Activated CD8-positive, alpha-beta T cell treated with anti-CD3 and anti-CD28 coated beads for 36 hours (primary cell): ENCODE measurements at regions of chr17 and their contacts with region 1.

Region 1: DNA sequence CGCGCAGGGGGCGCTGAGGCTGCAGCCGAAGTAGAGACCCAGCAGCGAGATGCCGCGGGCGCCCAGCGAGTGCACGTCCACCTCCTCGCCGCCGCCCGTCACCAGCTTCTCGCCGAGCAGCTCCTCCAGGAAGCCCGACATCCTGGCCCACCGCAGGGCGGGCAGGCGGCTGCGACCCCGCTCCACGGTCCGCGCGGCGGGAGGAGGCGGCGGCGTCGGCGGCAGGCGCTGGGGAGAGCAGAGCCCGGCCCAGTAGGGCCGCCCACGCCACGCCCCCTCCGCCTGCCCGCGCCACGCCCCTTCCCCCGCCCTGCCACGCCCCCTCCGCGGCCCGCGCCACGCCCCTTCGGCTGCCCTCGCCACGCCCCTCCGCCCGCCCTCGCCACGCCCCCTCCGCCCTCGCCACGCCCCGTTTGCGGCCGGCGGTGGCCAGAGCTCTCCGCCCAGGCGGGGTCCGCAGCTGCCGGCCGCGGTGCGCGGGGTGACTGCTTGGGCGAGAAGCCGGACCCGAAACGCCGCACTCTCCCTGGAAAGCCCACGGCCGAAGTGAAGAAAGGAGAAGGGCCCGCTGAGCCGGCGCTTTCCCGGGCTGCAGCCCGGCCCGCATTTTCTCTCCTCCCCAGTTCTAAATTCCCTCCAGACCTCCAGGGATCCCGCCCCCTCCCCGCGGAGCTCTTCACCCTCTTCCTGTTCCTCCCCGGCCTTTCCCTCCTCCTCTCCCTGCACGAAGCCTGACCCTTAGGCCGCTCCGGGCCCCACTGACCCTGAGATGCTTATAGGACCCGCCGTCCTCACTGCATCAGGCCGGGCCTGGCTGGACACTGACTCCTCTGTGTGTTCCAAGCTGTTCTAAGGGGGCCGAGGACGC is at the start of gene NXN:
- DNase-seq: peak; percentile 86
- ATAC-seq: peak; percentile 87
- H3K4me3 Mint-ChIP-seq: peak within 1 kb of the TSS; percentile 67
- H3K27ac Mint-ChIP-seq: no peak within 1 kb of the TSS
- H3K4me1 Mint-ChIP-seq: peaks cover 11% of the 10 kb centered on the region
- H3K27me3 Mint-ChIP-seq: peaks cover 28% of the 10 kb centered on the region
- CTCF ChIP-seq: no peak
- total RNA-seq, gene NXN: 1.2 to 1.4 TPM

Region 2: DNA sequence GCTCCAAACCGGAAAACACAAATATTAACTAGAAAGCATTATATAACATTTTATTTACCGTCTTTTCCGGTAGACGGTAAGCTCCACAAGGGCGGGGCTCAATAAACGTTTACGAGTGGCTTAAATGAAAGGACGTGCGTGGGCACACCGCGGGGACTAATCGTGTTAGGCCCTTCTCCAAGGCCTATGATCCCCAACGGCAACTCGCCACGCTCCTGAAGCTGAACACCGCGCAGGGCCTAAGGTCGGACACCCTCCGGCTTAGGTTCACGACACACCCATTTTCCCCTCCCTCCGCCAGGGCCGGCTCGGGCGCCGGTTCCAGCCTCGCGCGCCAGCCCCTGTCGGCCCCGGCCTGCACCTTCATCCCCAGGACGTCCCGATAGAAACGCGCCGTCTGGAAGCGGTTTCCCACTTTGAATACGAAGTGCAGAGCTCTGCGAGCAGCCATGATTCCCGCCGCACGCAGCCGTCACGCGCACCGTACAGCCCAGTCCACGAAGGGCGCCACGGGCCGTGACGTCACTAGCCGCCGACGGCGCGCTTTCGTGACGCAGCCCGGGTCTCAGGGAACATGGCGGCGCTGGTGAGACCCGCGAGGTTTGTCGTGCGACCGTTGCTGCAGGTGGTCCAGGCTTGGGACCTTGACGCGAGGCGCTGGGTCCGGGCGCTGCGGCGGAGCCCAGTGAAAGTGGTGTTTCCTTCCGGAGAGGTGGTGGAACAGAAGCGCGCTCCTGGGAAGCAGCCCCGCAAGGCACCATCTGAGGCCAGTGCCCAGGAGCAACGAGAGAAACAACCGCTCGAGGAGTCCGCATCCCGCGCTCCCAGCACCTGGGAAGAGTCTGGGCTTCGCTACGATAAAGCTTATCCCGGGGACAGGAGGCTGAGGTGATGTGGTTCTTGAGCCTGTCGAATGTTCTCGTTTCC is 197.7 kb before region 1 on chr17 and contains the starts of genes GLOD4 and MRM3:
- CTCF ChIA-PET with region 1: interaction called, 10 read pairs
- POLR2A ChIA-PET with region 1: interaction called, 4 read pairs
- intact Hi-C with region 1: no loop called
- DNase-seq: peak; percentile 96
- ATAC-seq: peak; percentile 95
- H3K4me3 Mint-ChIP-seq: peak within 1 kb of the TSS; percentile 89
- H3K27ac Mint-ChIP-seq: peak within 1 kb of the TSS; percentile 96
- H3K4me1 Mint-ChIP-seq: peaks cover 32% of the 10 kb centered on the region
- H3K27me3 Mint-ChIP-seq: no peaks in the 10 kb centered on the region
- CTCF ChIP-seq: peak; percentile 15
- total RNA-seq, gene GLOD4: 47.3 to 55.2 TPM
- total RNA-seq, gene MRM3: 35.5 to 36.2 TPM

Region 3: GRCh38 chr17:794876-795275 is 184.9 kb before region 1 on chr17:
- CTCF ChIA-PET with region 1: interaction called, 63 read pairs
- POLR2A ChIA-PET with region 1: no interaction called
- intact Hi-C with region 1: loop called (anchors 5 kb)
- DNase-seq: peak; percentile 59
- ATAC-seq: peak; percentile 88
- H3K4me3 Mint-ChIP-seq: no peak overlapping the region
- H3K27ac Mint-ChIP-seq: no peak overlapping the region
- H3K4me1 Mint-ChIP-seq: no peaks in the 10 kb centered on the region
- H3K27me3 Mint-ChIP-seq: no peaks in the 10 kb centered on the region
- CTCF ChIP-seq: peak; percentile 84

Region 4: DNA sequence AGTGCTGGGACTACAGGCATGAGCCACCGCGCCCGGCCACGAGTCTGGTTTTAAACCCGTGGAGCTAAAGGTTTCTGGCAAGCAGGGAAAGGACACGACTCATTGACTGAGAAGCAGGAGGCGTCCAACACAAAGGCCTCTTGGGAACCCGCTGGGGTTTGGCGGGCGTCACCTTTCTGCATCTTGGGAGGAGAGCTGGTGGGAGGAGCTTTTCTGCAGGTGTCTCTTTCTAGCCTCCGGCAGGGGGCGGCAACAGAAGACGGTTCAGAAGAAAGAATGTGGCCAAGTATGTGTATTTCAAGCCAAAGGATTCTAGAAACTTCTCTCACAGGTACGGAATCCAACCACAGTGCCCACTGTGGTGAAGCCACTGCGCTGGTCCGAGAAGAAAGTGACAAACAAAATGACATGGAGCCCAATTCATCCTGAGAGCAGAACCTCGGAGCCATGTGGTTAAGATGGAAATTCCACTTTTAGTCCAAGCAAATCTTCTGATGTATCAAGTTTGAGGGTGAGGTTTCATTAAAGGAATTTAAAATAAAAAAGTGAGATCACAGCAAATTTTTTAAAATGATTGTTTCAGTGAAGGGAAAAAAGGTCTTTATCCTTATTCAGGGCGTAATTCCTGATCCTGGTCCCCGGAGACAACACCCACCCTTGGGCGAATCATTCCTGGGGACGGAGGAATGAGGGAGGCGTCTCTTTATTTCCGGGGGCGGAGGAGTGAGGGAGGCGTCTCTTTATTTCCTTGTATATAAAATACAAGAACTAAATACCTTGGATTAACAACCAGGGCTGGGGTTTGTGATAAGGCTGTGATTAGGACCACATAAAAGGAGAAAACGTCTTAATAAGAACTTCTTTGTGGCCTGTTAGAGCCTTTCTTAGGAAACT is 100.0 kb before region 1 on chr17:
- CTCF ChIA-PET with region 1: interaction called, 52 read pairs
- POLR2A ChIA-PET with region 1: no interaction called
- intact Hi-C with region 1: loop called (anchors 10 kb)
- DNase-seq: peak; percentile 79
- ATAC-seq: peak; percentile 74
- H3K4me3 Mint-ChIP-seq: no peak overlapping the region
- H3K27ac Mint-ChIP-seq: no peak overlapping the region
- H3K4me1 Mint-ChIP-seq: peaks cover 11% of the 10 kb centered on the region
- H3K27me3 Mint-ChIP-seq: peaks cover 18% of the 10 kb centered on the region
- CTCF ChIP-seq: peak; percentile 55

Region 5: DNA sequence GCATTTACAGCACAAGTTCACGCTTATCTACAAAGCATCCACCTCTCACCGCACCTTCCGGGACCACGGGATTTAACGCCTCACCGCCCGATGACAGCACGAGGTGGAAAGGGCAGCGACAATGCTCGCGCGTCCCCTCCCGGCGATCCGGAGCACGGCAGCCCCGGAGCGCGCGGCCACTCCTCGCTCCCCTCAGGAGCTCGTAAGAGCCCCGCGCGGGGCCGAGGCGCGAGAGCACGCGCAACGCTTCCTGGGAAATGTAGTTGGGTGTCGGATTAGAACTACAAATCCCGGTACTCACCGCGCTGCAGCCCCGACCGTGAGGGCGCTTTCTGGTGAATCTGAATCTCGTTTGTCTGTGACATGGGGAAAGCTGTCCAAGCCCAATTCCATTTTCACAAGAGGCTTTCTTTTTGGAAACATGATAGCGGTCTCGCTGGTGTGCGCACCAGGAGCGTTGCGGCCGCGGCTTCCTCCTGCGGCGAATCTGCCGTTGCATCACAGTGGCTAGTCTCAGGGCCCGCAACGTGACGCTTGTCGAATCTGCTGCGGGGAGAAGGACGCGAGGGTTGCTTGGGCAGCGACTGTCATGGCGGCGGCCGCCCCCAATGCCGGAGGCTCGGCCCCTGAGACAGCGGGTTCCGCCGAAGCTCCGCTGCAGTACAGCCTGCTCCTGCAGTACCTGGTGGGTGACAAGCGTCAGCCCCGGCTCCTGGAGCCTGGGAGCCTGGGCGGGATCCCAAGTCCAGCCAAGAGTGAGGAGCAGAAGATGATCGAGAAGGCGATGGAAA is 17.0 kb after region 1 on chr17 and contains the start of gene TIMM22:
- CTCF ChIA-PET with region 1: interaction called, 50 read pairs
- POLR2A ChIA-PET with region 1: interaction called, 11 read pairs
- intact Hi-C with region 1: no loop called
- DNase-seq: peak; percentile 95
- ATAC-seq: peak; percentile 96
- H3K4me3 Mint-ChIP-seq: peak within 1 kb of the TSS; percentile 87
- H3K27ac Mint-ChIP-seq: peak within 1 kb of the TSS; percentile 99
- H3K4me1 Mint-ChIP-seq: peaks cover 24% of the 10 kb centered on the region
- H3K27me3 Mint-ChIP-seq: no peaks in the 10 kb centered on the region
- CTCF ChIP-seq: peak; percentile 94
- total RNA-seq, gene TIMM22: 8.8 to 10.2 TPM